ENCODE measurements at regions of chr19 and their contacts with region 1.

Region 1: GRCh38 chr19:4957981-4958380 is 10.9 kb upstream of the KDM4B start:
- DNase-seq: no peak
- H3K4me3 ChIP-seq: no peak overlapping the region
- H3K4me3 Mint-ChIP-seq: no peak overlapping the region
- H3K27ac ChIP-seq: no peak overlapping the region
- H3K27ac Mint-ChIP-seq: no peak overlapping the region
- H3K4me1 ChIP-seq: no peaks in the 10 kb centered on the region
- H3K4me1 Mint-ChIP-seq: peaks cover 0 to 3% (median 0%) of the 10 kb centered on the region in 4 donors
- H3K27me3 ChIP-seq: no peaks in the 10 kb centered on the region
- H3K27me3 Mint-ChIP-seq: no peaks in the 10 kb centered on the region

Region 2: GRCh38 chr19:4968462-4969291 is 10.7 kb after region 1 on chr19 and contains the start of gene KDM4B:
- CTCF ChIA-PET with region 1: interaction called, 4 read pairs
- POLR2A ChIA-PET with region 1: interaction called, 10 read pairs
- intact Hi-C with region 1: no loop called
- DNase-seq: peak; percentile 99 to 100 (median 100)
- H3K4me3 ChIP-seq: peak within 1 kb of the TSS; percentile 33 to 66
- H3K4me3 Mint-ChIP-seq: peak within 1 kb of the TSS; percentile 89 to 97 (median 92)
- H3K27ac ChIP-seq: peak within 1 kb of the TSS; percentile 42
- H3K27ac Mint-ChIP-seq: peak within 1 kb of the TSS; percentile 83 to 97 (median 94)
- H3K4me1 ChIP-seq: peaks cover 37% of the 10 kb centered on the region
- H3K4me1 Mint-ChIP-seq: peaks cover 24 to 40% (median 33%) of the 10 kb centered on the region in 4 donors
- H3K27me3 ChIP-seq: no peaks in the 10 kb centered on the region
- H3K27me3 Mint-ChIP-seq: no peaks in the 10 kb centered on the region
- total RNA-seq, gene KDM4B: 47.9 to 50.4 TPM